Right ventricle myocardium inferior (tissue), 1 donor: ENCODE measurements at regions of chr21 and their contacts with region 1.

Region 1: GRCh38 chr21:45363921-45364467 is 41.0 kb upstream of the COL18A1 start:
- DNase-seq: peak; percentile 90
- ATAC-seq: peak; percentile 86

Region 2: GRCh38 chr21:45319461-45320211 is 44.4 kb before region 1 on chr21:
- intact Hi-C with region 1: loop called (anchors 2 kb)
- DNase-seq: peak; percentile 80
- ATAC-seq: peak; percentile 46

Region 3: GRCh38 chr21:45404730-45405270 is 40.8 kb after region 1 on chr21 and contains the start of gene COL18A1:
- intact Hi-C with region 1: loop called (anchors 2 kb)
- DNase-seq: peak; percentile 80
- ATAC-seq: peak; percentile 48
- total RNA-seq, gene COL18A1: 51.6 TPM

Region 4: GRCh38 chr21:45551316-45551715 is 187.3 kb after region 1 on chr21:
- intact Hi-C with region 1: no loop called
- DNase-seq: peak; percentile 56
- ATAC-seq: no peak